CD4-positive, alpha-beta memory T cell (primary cell): ENCODE measurements at regions of chr19 and their contacts with region 1.

Region 1: DNA sequence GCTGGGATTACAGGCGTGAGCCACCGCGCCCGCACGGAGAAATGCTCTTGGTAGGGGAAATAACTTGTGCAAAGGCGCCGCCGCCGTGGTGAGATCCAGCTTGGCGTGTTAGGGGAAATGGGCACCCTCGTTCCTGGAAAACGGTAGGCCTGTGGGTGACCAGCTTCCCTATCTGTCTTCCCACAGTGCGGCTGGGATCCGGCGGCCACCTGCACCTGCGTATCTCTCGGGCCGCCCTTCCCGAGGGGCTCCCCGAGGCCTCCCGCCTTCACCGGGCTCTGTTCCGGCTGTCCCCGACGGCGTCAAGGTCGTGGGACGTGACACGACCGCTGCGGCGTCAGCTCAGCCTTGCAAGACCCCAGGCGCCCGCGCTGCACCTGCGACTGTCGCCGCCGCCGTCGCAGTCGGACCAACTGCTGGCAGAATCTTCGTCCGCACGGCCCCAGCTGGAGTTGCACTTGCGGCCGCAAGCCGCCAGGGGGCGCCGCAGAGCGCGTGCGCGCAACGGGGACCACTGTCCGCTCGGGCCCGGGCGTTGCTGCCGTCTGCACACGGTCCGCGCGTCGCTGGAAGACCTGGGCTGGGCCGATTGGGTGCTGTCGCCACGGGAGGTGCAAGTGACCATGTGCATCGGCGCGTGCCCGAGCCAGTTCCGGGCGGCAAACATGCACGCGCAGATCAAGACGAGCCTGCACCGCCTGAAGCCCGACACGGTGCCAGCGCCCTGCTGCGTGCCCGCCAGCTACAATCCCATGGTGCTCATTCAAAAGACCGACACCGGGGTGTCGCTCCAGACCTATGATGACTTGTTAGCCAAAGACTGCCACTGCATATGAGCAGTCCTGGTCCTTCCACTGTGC is 2.4 kb downstream of the GDF15 start:
- DNase-seq: peak; percentile 61 to 73 (median 67)
- H3K4me3 ChIP-seq: peak overlapping the region in 1 of 2 donors; percentile 31
- H3K4me3 Mint-ChIP-seq: peak overlapping the region; percentile 64 to 80 (median 76)
- H3K27ac ChIP-seq: no peak overlapping the region
- H3K27ac Mint-ChIP-seq: peak overlapping the region in 1 of 7 donors; percentile 12
- H3K4me1 ChIP-seq: peaks cover 7% of the 10 kb centered on the region
- H3K4me1 Mint-ChIP-seq: peaks cover 2 to 14% (median 6%) of the 10 kb centered on the region in 4 donors
- H3K27me3 ChIP-seq: peaks cover 21% of the 10 kb centered on the region
- H3K27me3 Mint-ChIP-seq: peaks cover 8 to 10% of the 10 kb centered on the region in 2 donors

Region 2: GRCh38 chr19:17747205-17748098 is 640.9 kb before region 1 on chr19:
- CTCF ChIA-PET with region 1: no interaction called
- POLR2A ChIA-PET with region 1: no interaction called
- intact Hi-C with region 1: no loop called
- DNase-seq: peak; percentile 94 to 96 (median 94)
- H3K4me3 ChIP-seq: peak overlapping the region in 1 of 2 donors; percentile 59
- H3K4me3 Mint-ChIP-seq: peak overlapping the region; percentile 73 to 96 (median 94)
- H3K27ac ChIP-seq: peak overlapping the region; percentile 52
- H3K27ac Mint-ChIP-seq: peak overlapping the region; percentile 31 to 90 (median 74)
- H3K4me1 ChIP-seq: peaks cover 44% of the 10 kb centered on the region
- H3K4me1 Mint-ChIP-seq: peaks cover 28 to 56% (median 41%) of the 10 kb centered on the region in 4 donors
- H3K27me3 ChIP-seq: no peaks in the 10 kb centered on the region
- H3K27me3 Mint-ChIP-seq: no peaks in the 10 kb centered on the region

Region 3: DNA sequence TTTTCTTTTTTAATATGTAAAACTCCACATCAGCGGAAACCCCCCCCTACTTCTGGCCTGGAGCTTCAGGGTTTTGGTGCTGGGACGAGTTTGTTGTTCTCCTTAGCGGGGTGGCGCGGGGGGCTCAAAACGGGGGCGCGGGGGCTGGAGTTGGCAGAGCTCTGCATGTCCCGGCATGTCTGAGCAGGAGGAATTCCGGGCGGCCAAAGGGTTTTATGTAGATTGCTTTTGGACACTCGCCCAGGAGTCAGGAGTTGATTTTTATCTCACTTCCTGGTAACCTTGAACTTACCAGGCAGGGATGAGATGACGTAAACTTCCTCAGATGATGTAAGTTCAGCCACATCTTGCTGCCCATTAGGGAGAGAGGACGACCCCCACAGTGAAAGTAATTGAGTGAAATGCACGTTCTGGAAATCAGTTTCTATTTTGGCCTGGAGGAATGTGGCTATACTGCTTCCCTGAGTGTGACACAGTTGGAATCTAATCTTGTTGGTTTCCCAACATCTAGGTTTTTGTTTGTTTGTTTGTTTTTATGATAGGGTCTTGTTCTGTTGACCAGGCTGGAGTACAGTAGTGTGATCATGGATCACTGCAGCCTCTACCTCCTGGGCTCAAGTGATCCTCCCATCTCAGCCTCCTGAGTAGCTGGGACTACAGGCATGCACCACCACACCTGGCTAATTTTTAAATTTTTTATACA is 23.4 kb before region 1 on chr19:
- CTCF ChIA-PET with region 1: interaction called, 10 read pairs
- POLR2A ChIA-PET with region 1: no interaction called
- intact Hi-C with region 1: no loop called
- DNase-seq: no peak
- H3K4me3 ChIP-seq: no peak overlapping the region
- H3K4me3 Mint-ChIP-seq: no peak overlapping the region
- H3K27ac ChIP-seq: no peak overlapping the region
- H3K27ac Mint-ChIP-seq: no peak overlapping the region
- H3K4me1 ChIP-seq: no peaks in the 10 kb centered on the region
- H3K4me1 Mint-ChIP-seq: no peaks in the 10 kb centered on the region
- H3K27me3 ChIP-seq: no peaks in the 10 kb centered on the region
- H3K27me3 Mint-ChIP-seq: no peaks in the 10 kb centered on the region

Region 4: GRCh38 chr19:18401580-18402112 is 13.3 kb after region 1 on chr19:
- CTCF ChIA-PET with region 1: interaction called, 19 read pairs
- POLR2A ChIA-PET with region 1: no interaction called
- intact Hi-C with region 1: no loop called
- DNase-seq: no peak
- H3K4me3 ChIP-seq: no peak overlapping the region
- H3K4me3 Mint-ChIP-seq: no peak overlapping the region
- H3K27ac ChIP-seq: no peak overlapping the region
- H3K27ac Mint-ChIP-seq: no peak overlapping the region
- H3K4me1 ChIP-seq: peaks cover 8% of the 10 kb centered on the region
- H3K4me1 Mint-ChIP-seq: no peaks in the 10 kb centered on the region
- H3K27me3 ChIP-seq: peaks cover 4% of the 10 kb centered on the region
- H3K27me3 Mint-ChIP-seq: peaks cover 3 to 6% of the 10 kb centered on the region in 2 donors

Region 5: GRCh38 chr19:18408053-18408476 is 19.7 kb after region 1 on chr19:
- CTCF ChIA-PET with region 1: interaction called, 92 read pairs
- POLR2A ChIA-PET with region 1: interaction called, 3 read pairs
- intact Hi-C with region 1: loop called (anchors 1 kb)
- DNase-seq: no peak
- H3K4me3 ChIP-seq: no peak overlapping the region
- H3K4me3 Mint-ChIP-seq: no peak overlapping the region
- H3K27ac ChIP-seq: no peak overlapping the region
- H3K27ac Mint-ChIP-seq: no peak overlapping the region
- H3K4me1 ChIP-seq: no peaks in the 10 kb centered on the region
- H3K4me1 Mint-ChIP-seq: peaks cover 3 to 7% (median 4%) of the 10 kb centered on the region in 4 donors
- H3K27me3 ChIP-seq: no peaks in the 10 kb centered on the region
- H3K27me3 Mint-ChIP-seq: peaks cover 0 to 2% of the 10 kb centered on the region in 2 donors